ENCODE measurements at regions of chr6 and their contacts with region 1.

Region 1: DNA sequence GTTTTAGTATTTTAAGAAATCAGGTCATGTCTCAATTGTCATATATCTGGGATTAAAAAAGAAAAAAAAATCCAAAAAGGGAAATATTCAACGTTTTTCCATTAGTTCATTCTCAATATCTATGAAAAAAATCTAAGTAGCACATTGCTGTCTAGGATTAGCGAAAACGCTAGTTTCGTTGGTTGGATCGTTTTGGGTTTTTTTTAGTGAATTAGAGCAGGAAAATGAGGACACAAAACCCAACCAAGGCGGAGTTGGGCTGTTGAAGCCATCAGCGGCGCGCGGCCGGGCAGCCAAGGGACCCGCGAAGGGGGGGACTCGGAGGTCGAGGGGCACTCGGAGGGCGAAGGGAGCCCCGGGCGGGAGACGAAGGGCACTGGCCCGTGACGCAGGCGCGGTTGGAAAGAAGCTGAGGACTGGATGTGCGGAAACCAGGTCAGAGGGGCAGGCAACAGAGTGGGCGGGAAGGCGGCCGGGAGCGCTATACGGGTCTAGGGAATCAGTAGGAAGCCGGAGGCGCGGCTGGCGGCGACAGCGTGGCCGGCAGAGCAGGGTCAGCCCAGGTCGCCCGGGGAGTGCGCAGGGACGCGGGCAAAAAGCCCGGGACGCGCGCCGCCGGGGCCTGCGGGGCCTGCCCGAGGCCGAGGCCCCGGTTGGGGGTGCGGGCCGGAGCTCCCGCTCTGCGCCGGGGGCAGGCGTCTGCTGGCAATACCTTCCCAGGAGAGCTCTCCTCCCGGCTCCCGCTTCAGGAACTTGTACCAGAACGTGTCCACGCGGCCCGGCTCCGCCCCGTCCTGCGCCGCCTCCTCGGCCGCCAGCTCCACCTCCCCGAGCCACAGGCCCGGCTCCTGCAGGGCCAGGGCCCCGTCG is 599 bp downstream of the EPM2A start:
- DNase-seq: peak; percentile 93 to 96
- ATAC-seq: peak; percentile 91
- H3K4me3 ChIP-seq: peak overlapping the region; percentile 59 to 87
- H3K27ac ChIP-seq: peak overlapping the region; percentile 88 to 97
- H3K4me1 ChIP-seq: no peaks in the 10 kb centered on the region
- H3K27me3 ChIP-seq: no peaks in the 10 kb centered on the region

Region 2: DNA sequence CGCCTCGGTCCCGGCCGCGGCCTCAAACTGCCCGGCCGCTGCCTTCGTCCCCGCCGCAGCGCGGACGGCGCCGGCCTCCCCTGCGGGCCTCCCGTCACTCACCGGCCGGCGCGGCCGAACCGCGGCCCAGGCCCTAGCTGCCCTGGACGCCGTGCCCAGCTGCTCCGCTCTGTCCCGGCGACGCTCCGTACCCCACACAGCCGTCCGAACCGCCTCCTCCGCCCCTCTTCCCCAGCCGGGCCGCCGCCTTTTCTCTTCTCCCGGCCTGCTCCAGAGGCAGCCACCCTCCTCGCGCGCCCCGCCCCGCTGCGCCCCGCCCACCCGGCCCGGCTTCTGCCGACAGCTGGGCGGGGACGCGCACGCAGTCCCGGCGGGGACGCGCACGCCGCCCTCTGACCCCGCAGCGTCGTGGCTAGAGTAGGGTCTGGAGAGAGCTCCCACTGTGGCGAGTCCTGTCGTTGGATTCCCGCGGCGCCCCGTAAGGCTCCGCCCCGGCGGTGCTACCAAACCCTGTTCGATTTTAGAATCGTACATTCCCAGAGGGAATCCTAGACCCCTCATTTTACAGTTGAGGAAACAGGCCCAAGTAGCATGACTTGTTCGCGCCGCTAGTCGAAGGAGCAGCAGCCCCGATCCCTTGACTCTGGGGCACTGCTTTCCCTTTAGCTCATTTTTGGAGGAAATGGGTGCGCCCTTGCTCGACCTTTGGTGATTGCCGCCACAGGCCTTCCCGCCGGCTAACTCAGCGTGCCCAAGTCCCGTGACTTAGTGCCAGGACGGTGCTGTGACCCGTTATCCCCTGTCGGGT is 80.0 kb after region 1 on chr6 and contains the start of gene FBXO30:
- intact Hi-C with region 1: loop called (anchors 2 to 5 kb)
- DNase-seq: peak; percentile 90 to 96
- ATAC-seq: peak; percentile 97
- H3K4me3 ChIP-seq: peak within 1 kb of the TSS; percentile 80 to 89
- H3K27ac ChIP-seq: peak within 1 kb of the TSS; percentile 88 to 91
- H3K4me1 ChIP-seq: peaks cover 2 to 8% of the 10 kb centered on the region in 2 donors
- H3K27me3 ChIP-seq: no peaks in the 10 kb centered on the region
- total RNA-seq, gene FBXO30: 12.0 to 17.2 TPM

Region 3: DNA sequence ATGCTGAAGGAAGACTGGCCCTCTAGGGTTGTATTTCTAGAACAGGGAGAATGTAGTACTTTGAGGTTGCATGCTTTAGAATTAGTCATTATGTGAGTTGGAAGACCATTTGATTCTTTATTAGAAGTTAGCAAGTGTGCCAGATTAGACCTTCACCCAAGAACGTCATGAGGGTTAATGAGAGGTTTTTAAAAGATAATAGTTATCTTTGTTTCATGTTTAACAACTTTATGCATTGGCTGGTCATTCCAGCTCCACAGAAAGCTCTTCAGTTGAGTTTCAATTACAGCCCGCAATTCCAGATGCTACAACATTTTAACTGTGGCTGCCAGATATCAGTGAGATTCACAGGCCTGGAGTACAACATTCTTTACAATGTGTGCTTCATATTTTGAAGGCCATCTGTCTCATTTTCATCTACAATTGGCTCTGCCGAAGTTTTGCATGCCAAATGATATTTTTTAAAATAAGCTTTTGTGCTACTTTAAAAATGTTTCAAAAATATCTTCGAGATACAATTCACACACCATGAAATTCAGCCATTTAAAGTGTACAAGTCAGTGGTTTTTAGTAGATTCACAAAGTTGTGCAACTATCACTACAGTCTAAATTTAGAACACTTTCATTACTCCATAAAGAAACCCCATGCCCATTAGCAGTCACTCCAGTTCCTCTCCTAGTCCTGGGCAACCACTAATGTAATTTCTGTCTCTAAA is 140.9 kb after region 1 on chr6:
- intact Hi-C with region 1: loop called (anchors 10 kb)
- DNase-seq: no peak
- ATAC-seq: peak; percentile 19
- H3K4me3 ChIP-seq: no peak overlapping the region
- H3K27ac ChIP-seq: peak overlapping the region in 1 of 2 donors; percentile 10
- H3K4me1 ChIP-seq: peaks cover 0 to 5% of the 10 kb centered on the region in 2 donors
- H3K27me3 ChIP-seq: no peaks in the 10 kb centered on the region

Region 4: GRCh38 chr6:145887969-145888368 is 153.2 kb after region 1 on chr6:
- intact Hi-C with region 1: loop called in 1 of 2 experiments (anchors 10 kb)
- DNase-seq: peak in 1 of 2 donors; percentile 42
- ATAC-seq: no peak
- H3K4me3 ChIP-seq: no peak overlapping the region
- H3K27ac ChIP-seq: no peak overlapping the region
- H3K4me1 ChIP-seq: no peaks in the 10 kb centered on the region
- H3K27me3 ChIP-seq: no peaks in the 10 kb centered on the region

Region 5: DNA sequence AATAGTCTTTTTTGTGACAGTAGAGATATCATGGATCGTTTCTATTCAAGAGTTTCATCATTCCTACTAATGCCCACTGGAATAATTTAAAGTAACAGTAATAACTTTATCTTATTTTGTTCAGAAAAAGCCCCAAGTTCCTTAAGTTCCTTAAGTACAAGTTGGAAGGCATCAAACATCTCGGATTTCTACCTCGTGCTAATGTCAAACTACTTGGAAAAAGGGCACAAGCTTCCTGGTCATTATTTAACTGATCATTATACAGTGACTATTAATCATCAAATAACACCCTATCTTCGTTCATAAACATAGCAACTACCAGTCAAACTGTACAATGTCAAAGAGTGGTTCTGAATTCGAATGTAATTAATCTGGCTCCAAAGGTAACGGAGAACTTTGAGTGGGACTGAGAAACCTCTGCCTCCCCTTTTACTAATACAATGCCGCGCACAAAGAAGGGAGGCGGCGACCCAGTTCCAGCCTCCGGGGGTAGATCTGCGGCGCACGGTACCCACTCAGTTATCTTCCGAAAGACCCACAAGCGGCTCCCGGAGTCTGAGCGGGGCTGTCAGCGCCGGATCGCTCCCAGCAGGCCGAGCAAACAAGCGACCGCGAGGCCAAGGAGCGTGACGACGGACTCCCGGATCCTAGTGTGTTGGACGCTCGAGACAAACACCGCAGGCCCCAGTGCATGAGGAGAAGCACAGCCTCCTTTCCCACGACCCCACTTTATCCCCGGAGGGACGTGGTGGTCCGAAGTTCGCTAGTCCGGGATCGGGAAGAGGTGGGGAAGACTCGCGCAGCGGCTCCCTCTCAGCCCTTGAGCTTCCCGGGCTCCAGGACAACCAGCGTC is 228.7 kb after region 1 on chr6:
- intact Hi-C with region 1: loop called in 1 of 2 experiments (anchors 10 kb)
- DNase-seq: peak; percentile 73 to 84
- ATAC-seq: peak; percentile 79
- H3K4me3 ChIP-seq: peak overlapping the region; percentile 55 to 70
- H3K27ac ChIP-seq: peak overlapping the region in 1 of 2 donors; percentile 69
- H3K4me1 ChIP-seq: no peaks in the 10 kb centered on the region
- H3K27me3 ChIP-seq: no peaks in the 10 kb centered on the region

Region 6: GRCh38 chr6:146543211-146543939 is 808.7 kb after region 1 on chr6 and contains the start of gene RAB32:
- intact Hi-C with region 1: loop called in 1 of 2 experiments (anchors 10 kb)
- DNase-seq: peak; percentile 97 to 98
- ATAC-seq: peak; percentile 98
- H3K4me3 ChIP-seq: peak within 1 kb of the TSS; percentile 77 to 92
- H3K27ac ChIP-seq: peak within 1 kb of the TSS; percentile 97 to 99
- H3K4me1 ChIP-seq: no peaks in the 10 kb centered on the region
- H3K27me3 ChIP-seq: no peaks in the 10 kb centered on the region
- total RNA-seq, gene RAB32: 31.9 to 61.2 TPM